ENCODE measurements at regions of chr17 and their contacts with region 1.

Region 1: GRCh38 chr17:409848-410545 is 57.4 kb upstream of the RPH3AL start:
- DNase-seq: peak; percentile 100
- H3K4me3 ChIP-seq: peak overlapping the region; percentile 4 to 90 (median 41)
- H3K27ac ChIP-seq: peak overlapping the region; percentile 4
- H3K4me1 ChIP-seq: peaks cover 5% of the 10 kb centered on the region
- H3K27me3 ChIP-seq: no peaks in the 10 kb centered on the region
- CTCF ChIP-seq: no peak
- POLR2A ChIP-seq: peak; percentile 75

Region 2: DNA sequence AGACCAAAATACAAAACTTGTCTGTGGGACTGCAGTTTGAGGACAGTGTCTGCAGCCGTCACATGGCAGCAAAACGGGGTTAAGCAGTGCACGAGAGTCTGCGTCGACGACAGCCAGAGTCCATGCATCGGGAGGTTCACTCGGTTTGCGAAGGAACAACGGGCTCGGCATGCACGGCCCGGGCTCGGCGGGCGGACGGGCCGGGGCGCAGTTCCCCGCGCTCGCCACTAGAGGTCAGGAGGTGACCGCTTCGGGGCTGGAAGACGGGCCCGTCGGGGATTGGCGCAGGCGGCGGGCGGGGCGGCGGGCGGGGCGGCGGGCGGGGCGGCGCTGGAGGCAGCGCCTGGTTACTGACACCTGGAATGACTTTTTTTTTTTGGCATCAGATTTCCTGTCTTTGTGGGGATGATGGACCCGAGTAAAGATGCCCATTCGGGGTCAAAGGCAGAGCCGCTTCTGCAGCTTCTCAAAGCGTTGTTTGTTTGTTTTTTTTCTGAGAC is 266.2 kb before region 1 on chr17:
- CTCF ChIA-PET with region 1: interaction called, 4 read pairs
- POLR2A ChIA-PET with region 1: no interaction called
- dilution Hi-C with region 1: no loop called
- intact Hi-C with region 1: loop called (anchors 5 kb)
- DNase-seq: peak; percentile 73
- H3K4me3 ChIP-seq: no peak overlapping the region
- H3K27ac ChIP-seq: no peak overlapping the region
- H3K4me1 ChIP-seq: no peaks in the 10 kb centered on the region
- H3K27me3 ChIP-seq: no peaks in the 10 kb centered on the region
- CTCF ChIP-seq: peak; percentile 73 to 87
- POLR2A ChIP-seq: no peak

Region 3: GRCh38 chr17:236638-237405 is 173.2 kb before region 1 on chr17:
- CTCF ChIA-PET with region 1: no interaction called
- POLR2A ChIA-PET with region 1: no interaction called
- dilution Hi-C with region 1: no loop called
- intact Hi-C with region 1: no loop called
- DNase-seq: no peak
- H3K4me3 ChIP-seq: no peak overlapping the region
- H3K27ac ChIP-seq: no peak overlapping the region
- H3K4me1 ChIP-seq: peaks cover 22% of the 10 kb centered on the region
- H3K27me3 ChIP-seq: no peaks in the 10 kb centered on the region
- CTCF ChIP-seq: no peak
- POLR2A ChIP-seq: no peak

Region 4: GRCh38 chr17:444879-445454 is 35.0 kb after region 1 on chr17:
- CTCF ChIA-PET with region 1: interaction called, 11 read pairs
- POLR2A ChIA-PET with region 1: no interaction called
- dilution Hi-C with region 1: no loop called
- intact Hi-C with region 1: no loop called
- DNase-seq: no peak
- H3K4me3 ChIP-seq: no peak overlapping the region
- H3K27ac ChIP-seq: no peak overlapping the region
- H3K4me1 ChIP-seq: no peaks in the 10 kb centered on the region
- H3K27me3 ChIP-seq: no peaks in the 10 kb centered on the region
- CTCF ChIP-seq: no peak
- POLR2A ChIP-seq: no peak

Region 5: GRCh38 chr17:559551-560431 is 149.8 kb after region 1 on chr17:
- CTCF ChIA-PET with region 1: interaction called, 29 read pairs
- POLR2A ChIA-PET with region 1: interaction called, 3 read pairs
- dilution Hi-C with region 1: no loop called
- intact Hi-C with region 1: loop called (anchors 2 kb)
- DNase-seq: peak; percentile 73
- H3K4me3 ChIP-seq: no peak overlapping the region
- H3K27ac ChIP-seq: peak overlapping the region; percentile 90
- H3K4me1 ChIP-seq: peaks cover 63% of the 10 kb centered on the region
- H3K27me3 ChIP-seq: no peaks in the 10 kb centered on the region
- CTCF ChIP-seq: no peak
- POLR2A ChIP-seq: no peak

Region 6: GRCh38 chr17:633641-634101 is 223.7 kb after region 1 on chr17:
- CTCF ChIA-PET with region 1: interaction called, 10 read pairs
- POLR2A ChIA-PET with region 1: no interaction called
- dilution Hi-C with region 1: no loop called
- intact Hi-C with region 1: no loop called
- DNase-seq: peak; percentile 78
- H3K4me3 ChIP-seq: no peak overlapping the region
- H3K27ac ChIP-seq: peak overlapping the region; percentile 71
- H3K4me1 ChIP-seq: peaks cover 11% of the 10 kb centered on the region
- H3K27me3 ChIP-seq: no peaks in the 10 kb centered on the region
- CTCF ChIP-seq: peak in 1 of 2 donors; percentile 16
- POLR2A ChIP-seq: no peak

Region 7: DNA sequence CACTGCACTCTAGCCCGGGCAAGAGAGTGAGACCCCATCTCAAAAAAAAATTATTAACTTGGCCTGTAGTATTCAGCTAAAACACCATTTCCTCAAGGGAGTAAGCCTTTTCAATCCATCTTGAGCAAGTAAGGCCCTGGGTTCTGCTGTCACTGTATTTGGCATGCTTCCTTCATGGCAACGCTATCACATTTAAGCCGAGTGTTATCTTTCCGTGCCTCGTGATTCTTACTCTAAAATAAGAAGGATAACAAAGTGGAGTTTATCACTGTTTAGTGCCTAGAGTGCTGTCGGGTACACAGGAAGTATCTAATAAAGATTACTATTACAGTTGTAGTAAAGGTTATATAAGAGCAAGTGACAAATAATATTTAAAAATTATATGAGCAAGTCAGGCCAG is 295.9 kb after region 1 on chr17:
- CTCF ChIA-PET with region 1: interaction called, 762 read pairs
- POLR2A ChIA-PET with region 1: interaction called, 4 read pairs
- dilution Hi-C with region 1: no loop called
- intact Hi-C with region 1: no loop called
- DNase-seq: no peak
- H3K4me3 ChIP-seq: no peak overlapping the region
- H3K27ac ChIP-seq: no peak overlapping the region
- H3K4me1 ChIP-seq: no peaks in the 10 kb centered on the region
- H3K27me3 ChIP-seq: no peaks in the 10 kb centered on the region
- CTCF ChIP-seq: no peak
- POLR2A ChIP-seq: no peak

Region 8: DNA sequence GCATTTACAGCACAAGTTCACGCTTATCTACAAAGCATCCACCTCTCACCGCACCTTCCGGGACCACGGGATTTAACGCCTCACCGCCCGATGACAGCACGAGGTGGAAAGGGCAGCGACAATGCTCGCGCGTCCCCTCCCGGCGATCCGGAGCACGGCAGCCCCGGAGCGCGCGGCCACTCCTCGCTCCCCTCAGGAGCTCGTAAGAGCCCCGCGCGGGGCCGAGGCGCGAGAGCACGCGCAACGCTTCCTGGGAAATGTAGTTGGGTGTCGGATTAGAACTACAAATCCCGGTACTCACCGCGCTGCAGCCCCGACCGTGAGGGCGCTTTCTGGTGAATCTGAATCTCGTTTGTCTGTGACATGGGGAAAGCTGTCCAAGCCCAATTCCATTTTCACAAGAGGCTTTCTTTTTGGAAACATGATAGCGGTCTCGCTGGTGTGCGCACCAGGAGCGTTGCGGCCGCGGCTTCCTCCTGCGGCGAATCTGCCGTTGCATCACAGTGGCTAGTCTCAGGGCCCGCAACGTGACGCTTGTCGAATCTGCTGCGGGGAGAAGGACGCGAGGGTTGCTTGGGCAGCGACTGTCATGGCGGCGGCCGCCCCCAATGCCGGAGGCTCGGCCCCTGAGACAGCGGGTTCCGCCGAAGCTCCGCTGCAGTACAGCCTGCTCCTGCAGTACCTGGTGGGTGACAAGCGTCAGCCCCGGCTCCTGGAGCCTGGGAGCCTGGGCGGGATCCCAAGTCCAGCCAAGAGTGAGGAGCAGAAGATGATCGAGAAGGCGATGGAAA is 586.8 kb after region 1 on chr17 and contains the start of gene TIMM22:
- CTCF ChIA-PET with region 1: interaction called, 16 read pairs
- POLR2A ChIA-PET with region 1: no interaction called
- dilution Hi-C with region 1: no loop called
- intact Hi-C with region 1: loop called (anchors 5 kb)
- DNase-seq: peak; percentile 98
- H3K4me3 ChIP-seq: peak within 1 kb of the TSS; percentile 77 to 97 (median 86)
- H3K27ac ChIP-seq: peak within 1 kb of the TSS; percentile 86
- H3K4me1 ChIP-seq: peaks cover 29% of the 10 kb centered on the region
- H3K27me3 ChIP-seq: no peaks in the 10 kb centered on the region
- CTCF ChIP-seq: peak; percentile 94 to 97
- POLR2A ChIP-seq: peak; percentile 81
- total RNA-seq, gene TIMM22: 19.5 and 19.6 TPM in 2 replicates

Measured in endothelial cell of umbilical vein (primary cell).